Activated T-helper 2 cell treated with anti-CD3 and anti-CD28 coated beads, Interferon-gamma antibody, Interleukin-2, Interleukin-4, amounts not matched to agents 10 μg/mL and 5 μg/mL and 100 μg/mL, durations not matched to agents 14 hours and 24 hours and 36 hours (primary cell): ENCODE measurements at regions of chr12 and their contacts with region 1.

Region 1: DNA sequence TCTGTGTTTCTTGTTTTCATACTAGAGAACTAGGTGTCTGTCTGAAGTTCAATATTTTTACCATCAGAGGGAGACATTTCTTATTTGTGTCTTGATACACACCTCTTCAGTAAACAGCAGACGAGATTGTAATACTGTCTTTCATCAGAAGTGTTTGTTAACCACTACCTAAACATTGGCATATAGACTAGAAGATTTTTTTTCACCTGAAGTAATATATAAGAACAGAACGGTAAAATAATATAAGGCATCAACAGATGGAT is 190.7 kb downstream of the ACSS3 start:
- DNase-seq: no peak
- H3K4me3 Mint-ChIP-seq: no peak overlapping the region
- H3K27ac Mint-ChIP-seq: no peak overlapping the region
- H3K4me1 Mint-ChIP-seq: no peaks in the 10 kb centered on the region
- H3K27me3 Mint-ChIP-seq: no peaks in the 10 kb centered on the region

Region 2: DNA sequence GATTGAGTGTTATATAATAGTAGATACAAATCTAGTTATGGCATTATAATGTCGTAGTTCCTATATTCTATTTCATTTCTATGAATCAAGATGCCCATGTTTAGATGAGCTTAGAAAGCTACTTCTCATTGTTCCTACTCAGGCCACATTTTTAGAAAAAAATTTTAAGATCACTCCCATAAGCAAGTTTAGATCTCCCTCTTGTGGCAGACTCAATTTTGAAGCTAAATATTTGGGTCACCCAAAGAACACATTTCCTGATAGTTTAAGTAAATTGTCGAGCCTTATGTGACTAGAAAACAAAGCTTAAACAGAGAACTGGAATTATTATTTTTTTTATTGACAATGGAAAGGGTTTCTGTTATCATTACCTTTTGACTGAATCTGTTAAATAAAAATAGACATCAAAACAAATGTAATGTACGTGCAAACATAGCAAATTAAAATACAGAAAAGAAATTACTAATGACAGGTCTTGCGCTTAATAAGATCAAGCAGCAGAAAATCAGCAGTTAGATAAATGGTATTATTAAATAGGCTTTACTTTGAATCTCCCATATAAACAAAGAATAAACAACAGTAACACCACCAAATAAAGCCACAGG is 10.5 kb before region 1 on chr12:
- intact Hi-C with region 1: loop called (anchors 2 kb)
- DNase-seq: no peak
- H3K4me3 Mint-ChIP-seq: no peak overlapping the region
- H3K27ac Mint-ChIP-seq: no peak overlapping the region
- H3K4me1 Mint-ChIP-seq: no peaks in the 10 kb centered on the region
- H3K27me3 Mint-ChIP-seq: no peaks in the 10 kb centered on the region

Region 3: DNA sequence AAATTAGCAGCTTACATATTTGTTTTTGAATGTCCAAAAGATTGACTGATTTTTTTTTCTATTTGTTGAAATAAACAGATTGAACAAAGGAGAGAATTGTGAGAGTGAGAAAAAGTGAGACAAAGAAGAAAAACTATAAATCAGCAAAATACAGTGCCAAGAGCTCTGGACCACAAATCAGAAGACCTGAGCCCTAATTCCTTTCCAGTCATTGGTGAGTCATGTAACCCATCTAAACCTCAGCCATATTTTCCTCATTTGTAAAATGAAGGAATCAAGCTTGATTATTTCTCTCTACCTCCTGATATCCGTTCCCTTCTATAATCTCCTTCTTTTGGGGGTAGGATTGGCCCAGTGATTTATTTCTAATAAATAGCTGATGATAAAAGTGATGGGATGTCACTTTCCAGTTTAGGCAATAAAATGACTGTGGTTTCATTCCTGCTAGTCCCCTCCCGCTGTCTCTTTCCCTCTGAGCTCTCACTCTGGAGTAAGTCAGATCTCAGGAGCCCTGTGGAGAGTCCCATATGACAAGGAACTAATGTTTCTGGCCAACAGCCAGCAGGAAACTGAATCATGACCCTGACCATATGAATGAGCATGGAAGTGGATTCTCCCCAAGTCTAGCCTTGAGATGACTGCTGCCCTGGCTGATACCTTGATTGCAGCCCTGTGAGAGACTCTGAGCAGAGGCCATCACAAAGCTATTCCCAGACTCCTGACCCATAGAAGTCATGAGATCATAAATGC is 28.1 kb after region 1 on chr12:
- intact Hi-C with region 1: no loop called
- DNase-seq: no peak
- H3K4me3 Mint-ChIP-seq: no peak overlapping the region
- H3K27ac Mint-ChIP-seq: no peak overlapping the region
- H3K4me1 Mint-ChIP-seq: no peaks in the 10 kb centered on the region
- H3K27me3 Mint-ChIP-seq: no peaks in the 10 kb centered on the region

Region 4: GRCh38 chr12:81440001-81440400 is 171.4 kb after region 1 on chr12:
- intact Hi-C with region 1: no loop called
- DNase-seq: no peak
- H3K4me3 Mint-ChIP-seq: no peak overlapping the region
- H3K27ac Mint-ChIP-seq: no peak overlapping the region
- H3K4me1 Mint-ChIP-seq: no peaks in the 10 kb centered on the region
- H3K27me3 Mint-ChIP-seq: no peaks in the 10 kb centered on the region